T-cell (primary cell): ENCODE measurements at regions of chr6 and their contacts with region 1.

Region 1: DNA sequence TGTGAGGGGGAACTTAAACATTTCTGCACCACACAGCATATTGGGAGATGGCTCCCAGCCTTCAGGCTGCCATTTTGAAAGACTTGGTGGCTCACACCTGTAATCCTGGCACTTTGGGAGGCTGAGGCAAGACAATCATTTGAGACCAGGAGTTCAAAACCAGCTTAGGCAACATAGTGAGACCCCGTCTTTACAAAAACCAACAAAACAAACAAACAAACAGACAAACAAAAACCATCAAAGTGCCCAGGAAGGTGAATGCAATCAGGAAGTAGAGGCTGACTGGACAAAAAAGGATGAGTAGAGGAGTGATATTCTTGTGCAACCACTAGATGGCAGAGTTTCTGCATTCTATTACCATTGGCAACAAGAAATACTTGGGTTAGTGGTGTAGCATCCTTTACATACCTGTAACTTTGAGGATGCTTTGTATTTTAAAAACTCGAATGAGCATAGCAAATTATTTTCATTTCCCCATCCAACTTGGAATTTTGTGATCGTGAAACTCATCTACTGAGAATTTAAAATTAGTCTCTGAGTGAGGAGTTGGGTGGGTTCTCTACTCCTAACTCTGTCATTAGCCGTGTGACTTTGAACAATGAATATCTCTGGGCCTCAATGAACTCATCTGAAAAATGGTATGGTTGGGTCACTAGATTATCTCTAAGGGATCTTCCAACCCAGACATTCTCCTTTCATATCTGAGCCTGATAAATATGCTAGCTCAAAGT is 84.4 kb downstream of the CRYBG1 start:
- DNase-seq: peak in 17 of 35 experiments; percentile 1 to 82 (median 18)
- ATAC-seq: peak; percentile 69 to 86 (median 74)
- H3K4me3 ChIP-seq: no peak overlapping the region
- H3K4me3 Mint-ChIP-seq: no peak overlapping the region
- H3K27ac ChIP-seq: no peak overlapping the region
- H3K27ac Mint-ChIP-seq: peak overlapping the region in 1 of 2 donors; percentile 32
- H3K4me1 ChIP-seq: peaks cover 10% of the 10 kb centered on the region in 2 experiments
- H3K4me1 Mint-ChIP-seq: peaks cover 13 to 15% (median 14%) of the 10 kb centered on the region in 3 donors
- H3K27me3 ChIP-seq: peaks cover 2 to 4% of the 10 kb centered on the region in 2 experiments
- H3K27me3 Mint-ChIP-seq: peaks cover 27 to 31% of the 10 kb centered on the region in 2 donors

Region 2: GRCh38 chr6:106556368-106556960 is 111.5 kb after region 1 on chr6:
- CTCF ChIA-PET with region 1: interaction called, 84 to 143 read pairs
- POLR2A ChIA-PET with region 1: no interaction called
- DNase-seq: peak in 1 of 35 experiments; percentile 62
- ATAC-seq: peak; percentile 45 to 73 (median 52)
- H3K4me3 ChIP-seq: no peak overlapping the region
- H3K4me3 Mint-ChIP-seq: no peak overlapping the region
- H3K27ac ChIP-seq: no peak overlapping the region
- H3K27ac Mint-ChIP-seq: peak overlapping the region; percentile 43 to 50
- H3K4me1 ChIP-seq: no peaks in the 10 kb centered on the region
- H3K4me1 Mint-ChIP-seq: peaks cover 9 to 19% (median 14%) of the 10 kb centered on the region in 3 donors
- H3K27me3 ChIP-seq: no peaks in the 10 kb centered on the region
- H3K27me3 Mint-ChIP-seq: no peaks in the 10 kb centered on the region

Region 3: GRCh38 chr6:106561686-106562405 is 116.9 kb after region 1 on chr6:
- CTCF ChIA-PET with region 1: interaction called, 84 to 143 read pairs
- POLR2A ChIA-PET with region 1: interaction called, 3 to 10 read pairs
- DNase-seq: no peak
- ATAC-seq: no peak
- H3K4me3 ChIP-seq: no peak overlapping the region
- H3K4me3 Mint-ChIP-seq: no peak overlapping the region
- H3K27ac ChIP-seq: no peak overlapping the region
- H3K27ac Mint-ChIP-seq: peak overlapping the region; percentile 57 to 63
- H3K4me1 ChIP-seq: no peaks in the 10 kb centered on the region
- H3K4me1 Mint-ChIP-seq: peaks cover 0 to 6% (median 4%) of the 10 kb centered on the region in 3 donors
- H3K27me3 ChIP-seq: no peaks in the 10 kb centered on the region
- H3K27me3 Mint-ChIP-seq: no peaks in the 10 kb centered on the region

Region 4: GRCh38 chr6:106569428-106569827 is 124.5 kb after region 1 on chr6:
- CTCF ChIA-PET with region 1: interaction called, 84 to 143 read pairs
- POLR2A ChIA-PET with region 1: interaction called, 5 to 10 read pairs
- DNase-seq: no peak
- ATAC-seq: no peak
- H3K4me3 ChIP-seq: no peak overlapping the region
- H3K4me3 Mint-ChIP-seq: no peak overlapping the region
- H3K27ac ChIP-seq: no peak overlapping the region
- H3K27ac Mint-ChIP-seq: no peak overlapping the region
- H3K4me1 ChIP-seq: no peaks in the 10 kb centered on the region
- H3K4me1 Mint-ChIP-seq: peaks cover 0 to 5% (median 2%) of the 10 kb centered on the region in 3 donors
- H3K27me3 ChIP-seq: no peaks in the 10 kb centered on the region
- H3K27me3 Mint-ChIP-seq: no peaks in the 10 kb centered on the region

Region 5: DNA sequence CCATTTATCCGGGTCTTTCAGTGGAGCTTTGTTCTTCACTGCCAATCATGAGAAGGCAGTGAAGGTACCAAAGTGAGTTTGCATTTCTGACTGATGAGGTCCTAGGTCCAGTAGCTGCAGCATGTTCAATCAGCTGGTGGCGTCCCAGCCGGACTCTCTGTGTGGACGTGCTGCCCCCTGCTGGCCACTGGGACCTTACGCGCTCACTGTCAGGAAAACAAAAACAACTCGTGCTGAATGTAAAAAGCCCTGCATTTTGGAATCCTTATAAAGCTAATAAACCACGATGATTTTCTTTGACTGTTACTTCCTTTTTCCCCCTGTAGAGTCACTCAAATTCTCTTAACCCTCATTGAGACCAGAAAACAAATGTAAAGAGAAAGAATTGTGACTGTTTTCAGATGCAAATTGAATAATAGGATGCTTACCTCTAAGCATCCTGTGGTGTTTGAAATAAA is 534.5 kb after region 1 on chr6:
- CTCF ChIA-PET with region 1: interaction called, 7 to 16 read pairs
- POLR2A ChIA-PET with region 1: no interaction called
- DNase-seq: peak; percentile 25 to 84 (median 63)
- ATAC-seq: peak; percentile 53 to 71 (median 62)
- H3K4me3 ChIP-seq: no peak overlapping the region
- H3K4me3 Mint-ChIP-seq: no peak overlapping the region
- H3K27ac ChIP-seq: no peak overlapping the region
- H3K27ac Mint-ChIP-seq: peak overlapping the region in 1 of 2 donors; percentile 1
- H3K4me1 ChIP-seq: peaks cover 0 to 9% of the 10 kb centered on the region in 2 experiments
- H3K4me1 Mint-ChIP-seq: peaks cover 0 to 7% (median 2%) of the 10 kb centered on the region in 3 donors
- H3K27me3 ChIP-seq: peaks cover 6 to 46% of the 10 kb centered on the region in 2 experiments
- H3K27me3 Mint-ChIP-seq: peaks cover 39 to 47% of the 10 kb centered on the region in 2 donors